ENCODE measurements at regions of chr19 and their contacts with region 1.

Region 1: GRCh38 chr19:13195678-13196077 is 45.5 kb downstream of the IER2 start:
- DNase-seq: peak; percentile 56
- ATAC-seq: peak; percentile 46
- H3K4me3 Mint-ChIP-seq: no peak overlapping the region
- H3K27ac Mint-ChIP-seq: no peak overlapping the region
- H3K4me1 Mint-ChIP-seq: peaks cover 13% of the 10 kb centered on the region
- H3K27me3 Mint-ChIP-seq: no peaks in the 10 kb centered on the region

Region 2: DNA sequence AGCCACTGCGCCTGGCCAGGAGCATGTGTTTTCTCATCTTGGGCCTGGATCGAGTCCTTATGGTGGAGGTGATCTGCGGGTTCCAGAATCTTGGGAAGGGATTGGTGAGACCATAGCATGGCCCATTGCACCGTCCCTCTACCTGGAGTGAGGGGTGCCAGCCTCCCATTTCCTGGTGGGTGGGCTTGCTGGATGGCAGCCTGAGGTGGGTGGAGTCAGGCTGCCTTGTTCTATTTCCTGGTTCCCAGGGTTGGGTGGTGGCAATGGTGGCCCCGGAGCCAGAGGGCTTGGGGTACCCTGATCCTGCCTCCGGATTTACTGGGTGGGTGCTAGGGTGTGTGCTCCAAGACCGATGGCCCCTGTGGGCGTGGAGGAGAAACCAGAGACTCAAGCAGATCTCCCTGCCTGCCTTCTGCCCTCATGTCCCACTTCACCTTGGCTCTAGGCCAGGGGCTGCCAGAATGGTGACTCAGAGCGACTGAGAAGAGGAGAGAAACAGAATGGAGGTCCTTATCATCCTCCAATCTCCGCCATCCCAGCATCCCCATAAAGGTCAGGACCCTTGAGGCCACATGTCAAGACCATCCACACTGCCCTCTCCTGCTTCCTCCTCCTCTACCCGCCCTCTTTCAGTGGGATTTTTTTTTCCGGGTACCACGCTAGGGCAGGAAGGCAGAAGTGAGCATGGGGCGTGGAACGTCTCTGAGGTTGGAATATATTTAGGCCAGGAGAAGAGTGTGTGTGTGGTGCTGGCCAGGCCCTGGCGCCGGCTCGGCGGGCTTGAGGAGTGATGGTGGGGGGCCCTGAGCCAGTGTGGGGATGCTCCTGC is 23.4 kb before region 1 on chr19:
- POLR2A ChIA-PET with region 1: interaction called, 10 read pairs
- DNase-seq: peak; percentile 71
- ATAC-seq: peak; percentile 6
- H3K4me3 Mint-ChIP-seq: peak overlapping the region; percentile 85
- H3K27ac Mint-ChIP-seq: peak overlapping the region; percentile 94
- H3K4me1 Mint-ChIP-seq: peaks cover 46% of the 10 kb centered on the region
- H3K27me3 Mint-ChIP-seq: no peaks in the 10 kb centered on the region

Region 3: DNA sequence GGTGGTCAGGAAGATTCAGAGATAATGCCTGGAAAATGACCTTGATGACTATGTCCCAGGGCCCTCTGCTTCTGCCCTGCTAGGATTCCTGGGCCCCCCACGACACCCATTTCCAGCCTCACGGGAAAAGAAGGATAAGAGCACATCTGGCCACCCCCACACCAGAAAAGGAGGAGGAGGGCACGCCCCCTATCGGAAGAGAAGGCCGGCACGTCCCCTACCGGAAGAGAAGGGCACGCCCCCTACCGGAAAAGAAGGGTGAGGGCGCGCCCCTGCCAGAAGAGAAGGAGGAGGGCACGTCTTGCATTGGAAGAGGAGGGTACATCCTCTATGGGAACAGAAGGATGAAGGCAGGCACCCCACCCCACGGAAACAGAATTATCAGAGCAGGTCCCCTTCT is 38.8 kb after region 1 on chr19:
- POLR2A ChIA-PET with region 1: no interaction called
- DNase-seq: peak; percentile 72
- ATAC-seq: peak; percentile 75
- H3K4me3 Mint-ChIP-seq: peak overlapping the region; percentile 47
- H3K27ac Mint-ChIP-seq: peak overlapping the region; percentile 72
- H3K4me1 Mint-ChIP-seq: peaks cover 13% of the 10 kb centered on the region
- H3K27me3 Mint-ChIP-seq: no peaks in the 10 kb centered on the region

Region 4: GRCh38 chr19:13277104-13277809 is 81.6 kb after region 1 on chr19:
- POLR2A ChIA-PET with region 1: no interaction called
- DNase-seq: peak; percentile 67
- ATAC-seq: peak; percentile 81
- H3K4me3 Mint-ChIP-seq: peak overlapping the region; percentile 64
- H3K27ac Mint-ChIP-seq: peak overlapping the region; percentile 91
- H3K4me1 Mint-ChIP-seq: peaks cover 24% of the 10 kb centered on the region
- H3K27me3 Mint-ChIP-seq: no peaks in the 10 kb centered on the region